CD8-positive, alpha-beta T cell (primary cell): ENCODE measurements at regions of chr1 and their contacts with region 1.

Region 1: GRCh38 chr1:225777583-225778336 is at the start of gene SRP9:
- DNase-seq: peak; percentile 98 to 100 (median 99)
- ATAC-seq: peak; percentile 93
- H3K4me3 ChIP-seq: peak within 1 kb of the TSS; percentile 63 to 76
- H3K4me3 Mint-ChIP-seq: no peak within 1 kb of the TSS
- H3K27ac ChIP-seq: peak within 1 kb of the TSS; percentile 90 to 96
- H3K27ac Mint-ChIP-seq: no peak within 1 kb of the TSS
- H3K4me1 ChIP-seq: peaks cover 57% of the 10 kb centered on the region
- H3K4me1 Mint-ChIP-seq: peaks cover 46% of the 10 kb centered on the region
- H3K27me3 ChIP-seq: no peaks in the 10 kb centered on the region
- H3K27me3 Mint-ChIP-seq: no peaks in the 10 kb centered on the region
- CTCF ChIP-seq: peak; percentile 70
- total RNA-seq, gene SRP9: 55.2 to 57.7 TPM

Region 2: DNA sequence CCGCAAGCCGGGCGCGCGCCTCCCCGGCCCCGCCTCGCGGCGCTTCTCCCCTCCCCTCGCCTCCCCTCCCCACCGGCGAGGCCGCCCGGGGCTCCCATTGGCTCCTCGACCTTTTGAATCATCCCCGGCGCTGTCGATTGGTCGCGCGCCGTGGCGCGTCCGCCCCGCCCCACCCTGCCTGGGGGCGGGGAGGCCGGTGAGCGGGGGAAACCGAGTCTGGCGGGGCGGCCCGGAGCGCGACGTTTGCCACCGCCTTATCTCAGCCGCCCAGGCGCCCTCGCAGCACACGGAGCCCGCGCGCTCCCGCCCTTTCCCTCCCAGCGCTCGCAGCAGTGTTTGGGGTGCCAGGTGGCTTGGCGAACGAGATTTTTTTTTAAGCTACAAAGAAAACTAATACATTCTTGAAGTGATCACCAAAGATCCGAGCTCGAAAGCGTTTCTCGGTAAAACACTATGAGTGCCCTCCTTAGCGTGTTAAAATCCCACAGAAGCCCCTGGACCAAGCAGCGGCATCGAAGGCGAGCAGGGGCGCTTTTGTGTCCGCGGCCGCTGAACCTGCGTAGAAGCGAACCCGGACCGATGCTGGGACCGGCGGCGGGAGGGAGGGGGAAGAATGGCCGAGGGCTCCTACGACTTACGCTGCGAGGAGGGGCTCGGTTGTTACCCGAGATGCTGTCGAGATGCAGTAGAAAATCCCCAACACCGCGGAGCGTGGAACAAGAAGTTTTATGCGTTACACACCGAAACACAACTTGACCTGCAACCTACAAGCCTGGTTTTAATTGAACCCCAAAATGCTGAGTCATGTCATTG is 349.5 kb before region 1 on chr1:
- CTCF ChIA-PET with region 1: no interaction called
- POLR2A ChIA-PET with region 1: interaction called, 6 read pairs
- intact Hi-C with region 1: loop called (anchors 1 kb)
- DNase-seq: peak; percentile 80 to 96 (median 91)
- ATAC-seq: peak; percentile 92
- H3K4me3 ChIP-seq: peak overlapping the region; percentile 80 to 89
- H3K4me3 Mint-ChIP-seq: peak overlapping the region; percentile 93
- H3K27ac ChIP-seq: peak overlapping the region; percentile 69 to 70
- H3K27ac Mint-ChIP-seq: peak overlapping the region; percentile 91
- H3K4me1 ChIP-seq: peaks cover 39% of the 10 kb centered on the region
- H3K4me1 Mint-ChIP-seq: peaks cover 44% of the 10 kb centered on the region
- H3K27me3 ChIP-seq: no peaks in the 10 kb centered on the region
- H3K27me3 Mint-ChIP-seq: no peaks in the 10 kb centered on the region
- CTCF ChIP-seq: no peak

Region 3: DNA sequence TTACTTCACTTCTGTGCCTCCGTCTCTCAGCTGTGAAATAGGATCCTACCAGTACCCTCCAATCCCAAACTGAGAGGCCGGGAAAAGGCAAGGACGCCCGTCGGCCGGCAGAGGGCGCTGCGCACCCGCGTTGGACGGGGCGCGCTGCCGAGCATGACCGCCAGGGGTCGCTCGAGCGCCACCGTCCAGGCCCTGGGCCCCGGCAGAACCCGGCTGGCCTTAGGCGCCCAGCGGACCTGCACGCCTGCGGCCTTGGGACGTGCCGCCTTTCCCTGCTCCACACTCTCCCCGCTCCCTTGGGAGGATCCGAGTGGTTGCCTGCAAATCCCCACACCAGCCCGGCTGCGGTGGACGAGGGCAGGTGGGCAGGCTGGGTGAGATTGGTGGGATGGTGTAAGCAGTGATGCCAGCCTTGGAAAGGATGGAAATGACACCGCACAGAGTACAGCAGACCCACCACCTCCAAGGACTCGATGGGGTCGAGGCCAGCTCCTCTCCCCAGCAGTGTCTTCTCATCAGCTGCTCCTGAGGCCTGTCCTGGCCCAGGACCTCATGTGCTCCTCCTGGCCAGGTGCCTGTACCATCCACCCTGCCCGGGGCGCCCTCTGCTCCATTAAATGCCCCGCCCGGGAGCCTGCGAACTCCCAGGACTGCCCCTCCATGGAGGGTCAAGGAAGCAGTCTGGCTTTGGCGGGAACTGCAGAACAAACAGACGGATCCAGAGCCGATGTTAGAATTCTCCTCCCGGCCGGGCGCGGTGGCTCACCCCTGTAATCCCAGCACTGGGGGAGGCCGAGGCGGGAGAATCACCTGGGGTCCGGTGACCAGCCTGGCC is 302.6 kb before region 1 on chr1:
- CTCF ChIA-PET with region 1: interaction called, 8 read pairs
- POLR2A ChIA-PET with region 1: no interaction called
- intact Hi-C with region 1: loop called (anchors 2 kb)
- DNase-seq: peak; percentile 44 to 90 (median 70)
- ATAC-seq: peak; percentile 86
- H3K4me3 ChIP-seq: no peak overlapping the region
- H3K4me3 Mint-ChIP-seq: no peak overlapping the region
- H3K27ac ChIP-seq: no peak overlapping the region
- H3K27ac Mint-ChIP-seq: no peak overlapping the region
- H3K4me1 ChIP-seq: peaks cover 53% of the 10 kb centered on the region
- H3K4me1 Mint-ChIP-seq: peaks cover 48% of the 10 kb centered on the region
- H3K27me3 ChIP-seq: no peaks in the 10 kb centered on the region
- H3K27me3 Mint-ChIP-seq: no peaks in the 10 kb centered on the region
- CTCF ChIP-seq: peak; percentile 100

Region 4: DNA sequence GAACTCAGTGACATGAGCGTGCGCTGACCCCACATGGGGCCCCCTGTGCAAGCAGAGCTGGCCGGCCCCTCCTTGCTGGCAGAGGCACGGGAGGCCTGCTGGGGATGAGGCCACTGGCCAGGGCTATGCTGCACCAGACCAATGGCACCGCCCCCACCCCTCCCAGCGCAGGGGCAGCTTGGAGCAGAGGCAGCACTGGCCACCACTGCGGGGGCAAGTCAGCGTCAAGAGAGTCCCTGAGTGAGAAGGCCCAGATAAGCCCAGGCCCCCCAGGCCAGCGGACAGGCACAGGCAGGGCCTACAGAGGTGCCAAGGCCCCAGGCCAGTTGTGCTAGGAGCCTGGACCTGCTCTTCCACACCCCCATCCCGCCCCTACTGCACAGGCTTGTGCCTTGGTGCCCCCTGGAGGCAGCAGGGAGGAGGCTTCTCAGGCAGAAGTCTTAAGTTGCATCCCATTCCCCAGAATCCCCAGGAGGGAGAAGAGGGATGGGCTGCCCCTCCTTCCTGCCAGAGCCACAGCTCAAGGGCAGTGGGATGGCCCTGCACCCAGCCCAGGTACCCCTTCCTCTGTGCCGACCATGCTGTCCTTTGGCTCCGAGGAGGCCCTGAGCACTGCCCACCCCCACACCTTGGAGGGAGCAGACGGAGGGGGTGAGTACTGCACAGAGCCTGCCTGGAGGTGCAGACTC is 68.0 kb after region 1 on chr1:
- CTCF ChIA-PET with region 1: interaction called, 6 read pairs
- POLR2A ChIA-PET with region 1: interaction called, 13 read pairs
- intact Hi-C with region 1: loop called (anchors 5 kb)
- DNase-seq: peak in 5 of 9 experiments; percentile 27 to 51 (median 39)
- ATAC-seq: no peak
- H3K4me3 ChIP-seq: no peak overlapping the region
- H3K4me3 Mint-ChIP-seq: no peak overlapping the region
- H3K27ac ChIP-seq: no peak overlapping the region
- H3K27ac Mint-ChIP-seq: peak overlapping the region; percentile 52
- H3K4me1 ChIP-seq: peaks cover 54% of the 10 kb centered on the region
- H3K4me1 Mint-ChIP-seq: peaks cover 64% of the 10 kb centered on the region
- H3K27me3 ChIP-seq: no peaks in the 10 kb centered on the region
- H3K27me3 Mint-ChIP-seq: no peaks in the 10 kb centered on the region
- CTCF ChIP-seq: peak; percentile 16

Region 5: GRCh38 chr1:225911191-225912130 is 133.7 kb after region 1 on chr1:
- CTCF ChIA-PET with region 1: interaction called, 22 read pairs
- POLR2A ChIA-PET with region 1: interaction called, 11 read pairs
- intact Hi-C with region 1: loop called (anchors 1 kb)
- DNase-seq: peak; percentile 49 to 89 (median 71)
- ATAC-seq: peak; percentile 93
- H3K4me3 ChIP-seq: no peak overlapping the region
- H3K4me3 Mint-ChIP-seq: no peak overlapping the region
- H3K27ac ChIP-seq: no peak overlapping the region
- H3K27ac Mint-ChIP-seq: peak overlapping the region; percentile 71
- H3K4me1 ChIP-seq: peaks cover 32% of the 10 kb centered on the region
- H3K4me1 Mint-ChIP-seq: peaks cover 40% of the 10 kb centered on the region
- H3K27me3 ChIP-seq: no peaks in the 10 kb centered on the region
- H3K27me3 Mint-ChIP-seq: no peaks in the 10 kb centered on the region
- CTCF ChIP-seq: peak; percentile 84

Region 6: GRCh38 chr1:225999227-225999911 is 221.6 kb after region 1 on chr1 and contains the start of gene SDE2:
- CTCF ChIA-PET with region 1: no interaction called
- POLR2A ChIA-PET with region 1: interaction called, 15 read pairs
- intact Hi-C with region 1: loop called (anchors 1 to 2 kb)
- DNase-seq: peak; percentile 99 to 100 (median 100)
- ATAC-seq: peak; percentile 80
- H3K4me3 ChIP-seq: peak within 1 kb of the TSS; percentile 82 to 92
- H3K4me3 Mint-ChIP-seq: peak within 1 kb of the TSS; percentile 100
- H3K27ac ChIP-seq: peak within 1 kb of the TSS; percentile 99
- H3K27ac Mint-ChIP-seq: peak within 1 kb of the TSS; percentile 100
- H3K4me1 ChIP-seq: peaks cover 88% of the 10 kb centered on the region
- H3K4me1 Mint-ChIP-seq: peaks cover 79% of the 10 kb centered on the region
- H3K27me3 ChIP-seq: no peaks in the 10 kb centered on the region
- H3K27me3 Mint-ChIP-seq: no peaks in the 10 kb centered on the region
- CTCF ChIP-seq: no peak
- total RNA-seq, gene SDE2: 53.3 to 55.3 TPM

Region 7: DNA sequence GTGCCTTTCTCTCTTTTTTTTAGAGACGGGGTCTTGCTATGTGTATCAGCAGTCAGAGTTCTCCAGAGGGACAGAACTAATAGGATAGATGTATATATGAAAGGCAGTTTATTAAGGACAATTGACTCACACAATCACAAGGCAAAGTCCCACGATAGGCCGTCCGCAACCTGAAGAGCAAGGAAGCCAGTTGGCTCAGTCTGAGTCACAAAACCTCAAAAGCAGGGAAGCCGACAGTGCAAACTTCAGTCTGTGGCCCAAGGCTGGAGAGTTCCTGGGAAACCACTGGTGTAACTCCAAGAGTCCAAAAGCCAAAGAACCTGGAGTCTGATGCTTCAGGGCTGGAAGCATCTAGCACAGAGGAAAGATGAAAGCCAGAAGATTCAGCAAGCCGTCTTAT is 268.5 kb after region 1 on chr1:
- CTCF ChIA-PET with region 1: no interaction called
- POLR2A ChIA-PET with region 1: no interaction called
- intact Hi-C with region 1: no loop called
- DNase-seq: no peak
- ATAC-seq: no peak
- H3K4me3 ChIP-seq: no peak overlapping the region
- H3K4me3 Mint-ChIP-seq: no peak overlapping the region
- H3K27ac ChIP-seq: no peak overlapping the region
- H3K27ac Mint-ChIP-seq: no peak overlapping the region
- H3K4me1 ChIP-seq: no peaks in the 10 kb centered on the region
- H3K4me1 Mint-ChIP-seq: no peaks in the 10 kb centered on the region
- H3K27me3 ChIP-seq: no peaks in the 10 kb centered on the region
- H3K27me3 Mint-ChIP-seq: no peaks in the 10 kb centered on the region
- CTCF ChIP-seq: no peak